Right ventricle myocardium inferior (tissue), 1 donor: ENCODE measurements at regions of chr14 and their contacts with region 1.

Region 1: GRCh38 chr14:54347997-54348611 is 48.7 kb upstream of the CDKN3 start:
- DNase-seq: no peak
- ATAC-seq: peak; percentile 48

Region 2: DNA sequence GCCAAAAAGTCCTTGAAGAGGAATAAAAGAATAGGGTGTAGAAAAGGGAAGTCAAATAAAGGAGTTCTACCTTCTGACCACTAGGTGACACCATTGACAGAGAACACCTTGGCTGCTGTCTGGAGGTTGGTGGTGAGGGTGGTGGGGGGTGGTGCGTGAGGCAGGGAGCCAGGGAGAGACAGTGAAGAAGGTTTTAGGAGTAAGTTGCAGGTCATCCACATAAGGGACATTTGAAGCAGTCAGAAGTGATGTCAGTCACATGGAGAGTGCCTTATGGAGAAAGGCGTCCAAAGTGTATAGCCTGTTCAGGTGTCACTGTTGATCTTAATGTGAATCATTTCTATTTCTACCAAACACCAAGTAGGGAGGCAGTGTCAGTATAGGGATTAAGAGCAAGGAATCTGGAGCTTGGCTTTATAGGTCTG is 915.7 kb before region 1 on chr14:
- intact Hi-C with region 1: loop called (anchors 10 kb)
- DNase-seq: no peak
- ATAC-seq: no peak